GM12878 (cell line): ENCODE measurements at regions of chr10 and their contacts with region 1.

Region 1: DNA sequence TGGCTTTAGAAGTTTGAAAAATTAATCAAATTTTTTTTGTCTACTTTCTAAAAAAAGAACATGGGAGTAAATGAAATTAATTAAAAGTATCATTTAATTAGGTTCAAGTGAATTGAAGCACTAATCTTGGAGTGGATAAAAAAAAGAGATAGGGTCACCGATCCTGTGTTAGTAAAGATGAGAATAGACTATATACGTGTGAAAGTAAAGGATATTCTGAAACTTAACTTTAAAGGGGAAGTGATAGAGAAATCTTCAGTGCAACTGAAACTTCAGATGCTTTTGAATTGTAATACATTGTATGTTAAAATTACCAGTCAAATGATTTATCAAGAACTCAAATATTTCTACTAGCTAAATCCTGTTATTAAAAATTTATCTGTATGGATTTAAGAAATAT is 4.8 kb downstream of the NHLRC2 start:
- DNase-seq: no peak
- ATAC-seq: peak; percentile 42
- H3K4me3 ChIP-seq: peak overlapping the region; percentile 46
- H3K27ac ChIP-seq: peak overlapping the region; percentile 92
- H3K4me1 ChIP-seq: peaks cover 11% of the 10 kb centered on the region
- H3K27me3 ChIP-seq: no peaks in the 10 kb centered on the region
- CTCF ChIP-seq: no peak
- EP300 ChIP-seq: peak; percentile 14 to 48; a peak in 1 of 4 replicates
- POLR2A ChIP-seq: no peak
- RAD21 ChIP-seq: no peak

Region 2: GRCh38 chr10:113267619-113268562 is 591.4 kb before region 1 on chr10:
- CTCF ChIA-PET with region 1: no interaction called
- POLR2A ChIA-PET with region 1: no interaction called
- RAD21 ChIA-PET with region 1: no interaction called
- SMC1A ChIA-PET with region 1: no interaction called
- in situ Hi-C with region 1: no loop called
- intact Hi-C with region 1: no loop called
- DNase-seq: no peak
- ATAC-seq: no peak
- H3K4me3 ChIP-seq: no peak overlapping the region
- H3K27ac ChIP-seq: no peak overlapping the region
- H3K4me1 ChIP-seq: no peaks in the 10 kb centered on the region
- H3K27me3 ChIP-seq: no peaks in the 10 kb centered on the region; a peak in 1 of 4 replicates
- CTCF ChIP-seq: no peak
- EP300 ChIP-seq: no peak
- POLR2A ChIP-seq: no peak
- RAD21 ChIP-seq: no peak

Region 3: DNA sequence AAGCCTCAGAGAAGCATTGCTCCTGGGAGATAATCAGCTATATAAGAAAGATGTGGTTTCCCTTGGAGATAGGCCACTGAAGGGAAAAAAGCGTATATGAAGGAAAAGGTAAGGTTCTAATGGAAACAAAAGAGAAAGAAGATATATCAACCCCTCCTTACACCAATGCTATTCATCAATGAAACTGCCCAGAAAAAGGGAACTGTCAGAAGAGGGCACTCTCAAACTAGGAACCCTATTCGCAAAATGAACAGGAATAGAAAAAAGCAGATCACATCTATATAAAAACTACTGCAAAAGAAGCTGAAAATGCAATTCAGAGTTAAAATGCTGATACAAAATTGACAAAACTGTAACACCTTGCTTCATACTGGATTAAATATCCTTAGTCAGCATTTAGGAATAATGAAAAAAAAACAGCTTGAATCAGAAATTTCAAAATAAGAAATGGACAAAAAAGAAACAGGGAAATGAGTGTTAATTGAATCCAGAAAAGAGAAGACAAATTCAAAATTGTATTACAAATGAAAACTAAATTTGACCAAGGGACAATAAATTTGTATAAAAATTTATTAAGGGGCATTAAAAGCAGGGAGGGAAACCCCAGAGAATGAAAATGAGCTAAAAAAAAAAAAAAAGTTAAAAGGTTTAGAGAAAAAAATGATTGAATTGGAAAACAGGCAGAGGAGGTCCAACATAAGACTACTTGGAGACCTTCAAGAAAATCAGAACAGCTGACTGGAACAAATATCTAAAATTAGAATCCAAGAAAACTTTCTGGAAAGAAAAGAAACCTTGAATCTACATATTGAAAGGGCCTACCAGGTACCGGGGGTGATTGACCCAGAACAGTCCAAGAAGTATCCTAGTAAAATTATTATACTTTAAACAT is 13.1 kb after region 1 on chr10:
- CTCF ChIA-PET with region 1: interaction called, 5 read pairs
- POLR2A ChIA-PET with region 1: interaction called, 9 read pairs
- RAD21 ChIA-PET with region 1: interaction called, 30 read pairs
- SMC1A ChIA-PET with region 1: interaction called, 13 read pairs
- in situ Hi-C with region 1: no loop called
- intact Hi-C with region 1: no loop called
- DNase-seq: no peak
- ATAC-seq: peak; percentile 60
- H3K4me3 ChIP-seq: no peak overlapping the region
- H3K27ac ChIP-seq: no peak overlapping the region
- H3K4me1 ChIP-seq: no peaks in the 10 kb centered on the region; the same call in 1 of the 2 replicates
- H3K27me3 ChIP-seq: no peaks in the 10 kb centered on the region
- CTCF ChIP-seq: peak in 2 of 3 experiments; percentile 11 to 36; a peak in 2 of 6 replicates
- EP300 ChIP-seq: no peak
- POLR2A ChIP-seq: no peak
- RAD21 ChIP-seq: peak; percentile 52

Region 4: GRCh38 chr10:113879691-113880090 is 20.4 kb after region 1 on chr10:
- CTCF ChIA-PET with region 1: interaction called, 5 read pairs
- POLR2A ChIA-PET with region 1: interaction called, 4 read pairs
- RAD21 ChIA-PET with region 1: interaction called, 30 read pairs
- SMC1A ChIA-PET with region 1: interaction called, 10 read pairs
- in situ Hi-C with region 1: no loop called
- intact Hi-C with region 1: loop called (anchors 2 kb)
- DNase-seq: peak; percentile 48
- ATAC-seq: peak; percentile 90
- H3K4me3 ChIP-seq: peak overlapping the region; percentile 47
- H3K27ac ChIP-seq: peak overlapping the region; percentile 86
- H3K4me1 ChIP-seq: peaks cover 25% of the 10 kb centered on the region
- H3K27me3 ChIP-seq: no peaks in the 10 kb centered on the region
- CTCF ChIP-seq: no peak
- EP300 ChIP-seq: peak; percentile 73 to 77; a peak in 2 of 4 replicates
- POLR2A ChIP-seq: no peak
- RAD21 ChIP-seq: no peak

Region 5: DNA sequence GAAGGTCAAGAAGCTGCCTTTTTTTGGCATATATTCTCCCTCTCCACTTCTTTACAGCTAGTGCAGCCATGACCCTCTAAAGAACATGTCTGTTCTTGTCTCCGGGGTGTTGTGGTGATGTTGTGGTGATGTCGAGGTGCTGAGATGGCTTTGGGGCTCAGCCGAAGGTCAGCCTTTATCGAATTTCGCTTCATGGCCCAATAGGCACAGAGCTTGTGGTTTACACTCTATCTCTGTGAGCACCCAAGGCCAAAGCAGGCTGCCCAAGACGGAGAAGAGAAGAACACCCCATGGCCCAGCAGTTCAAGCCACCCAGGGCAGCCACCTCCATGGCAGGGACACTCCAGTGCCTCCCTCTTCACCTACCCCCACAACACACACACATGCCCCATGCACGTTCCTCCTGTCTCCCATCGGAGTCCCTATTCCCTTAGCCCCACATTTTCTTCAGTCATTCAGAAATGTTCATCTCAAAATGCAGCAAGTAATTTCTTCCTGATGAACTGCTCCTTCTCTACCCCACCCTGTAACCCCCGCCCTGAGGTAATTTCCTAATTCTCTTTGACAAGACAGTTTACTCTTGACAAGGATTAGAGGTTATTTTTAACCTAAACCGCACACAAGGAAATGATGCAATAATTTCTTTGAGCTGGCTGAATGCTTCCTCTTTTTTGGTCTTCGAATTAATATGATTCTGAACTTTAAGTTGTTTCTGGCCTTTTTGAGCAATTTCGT is 165.8 kb after region 1 on chr10:
- CTCF ChIA-PET with region 1: no interaction called
- POLR2A ChIA-PET with region 1: interaction called, 6 read pairs
- RAD21 ChIA-PET with region 1: interaction called, 12 read pairs
- SMC1A ChIA-PET with region 1: interaction called, 5 read pairs
- in situ Hi-C with region 1: no loop called
- intact Hi-C with region 1: loop called (anchors 2 kb)
- DNase-seq: peak; percentile 86
- ATAC-seq: peak; percentile 90
- H3K4me3 ChIP-seq: peak overlapping the region; percentile 51
- H3K27ac ChIP-seq: peak overlapping the region; percentile 86
- H3K4me1 ChIP-seq: peaks cover 25% of the 10 kb centered on the region
- H3K27me3 ChIP-seq: no peaks in the 10 kb centered on the region
- CTCF ChIP-seq: no peak
- EP300 ChIP-seq: peak; percentile 61 to 78
- POLR2A ChIP-seq: peak; percentile 73
- RAD21 ChIP-seq: peak; percentile 35; the same call in 1 of the 2 replicates